ENCODE measurements at regions of chr22 and their contacts with region 1.

Region 1: DNA sequence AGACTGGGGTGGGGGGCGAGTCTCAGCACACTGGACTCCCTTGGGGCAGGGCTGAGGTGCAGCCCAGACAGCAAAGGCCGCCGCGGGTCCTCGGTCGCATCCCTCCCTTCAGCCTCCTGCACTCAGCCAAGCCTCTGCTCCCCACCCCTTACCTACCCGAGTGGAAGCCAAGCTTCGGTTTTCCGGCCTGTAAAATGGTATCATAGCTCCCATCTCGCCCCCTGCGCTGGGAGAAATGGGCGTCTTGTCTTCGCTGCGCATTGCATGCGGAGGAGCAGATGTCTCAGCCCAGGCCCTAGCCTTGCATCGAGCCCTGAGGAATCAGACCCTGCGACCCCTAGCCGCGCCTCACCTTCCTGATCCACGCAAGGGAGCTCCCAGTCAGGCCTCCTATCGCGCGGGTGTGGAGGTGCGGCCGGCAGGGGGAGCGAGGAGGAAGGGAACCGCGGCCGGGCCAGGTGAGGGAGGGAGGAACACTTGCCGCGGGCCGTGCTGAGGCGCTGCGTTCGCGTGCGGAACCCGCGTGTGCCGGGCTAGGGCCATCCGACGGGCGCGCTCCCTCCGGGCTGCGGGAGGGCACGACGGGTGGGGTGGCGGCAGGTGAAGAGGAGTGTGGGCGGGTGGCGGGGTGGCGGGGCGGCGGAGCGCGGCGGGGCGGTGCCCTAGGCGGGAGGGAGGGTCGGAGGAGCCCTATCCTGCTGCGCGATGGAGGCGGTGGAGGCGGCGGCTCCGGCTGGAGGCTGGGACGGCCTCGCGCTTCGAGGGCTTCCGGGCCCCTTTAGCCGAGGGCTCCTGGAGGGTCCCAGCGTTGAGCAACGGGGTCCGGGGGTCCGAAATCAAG is 4.1 kb upstream of the TBX1 start:
- DNase-seq: no peak
- ATAC-seq: peak; percentile 72
- H3K4me3 Mint-ChIP-seq: peak overlapping the region; percentile 66
- H3K27ac Mint-ChIP-seq: no peak overlapping the region
- H3K4me1 Mint-ChIP-seq: peaks cover 29% of the 10 kb centered on the region
- H3K27me3 Mint-ChIP-seq: peaks cover 48% of the 10 kb centered on the region
- CTCF ChIP-seq: no peak

Region 2: DNA sequence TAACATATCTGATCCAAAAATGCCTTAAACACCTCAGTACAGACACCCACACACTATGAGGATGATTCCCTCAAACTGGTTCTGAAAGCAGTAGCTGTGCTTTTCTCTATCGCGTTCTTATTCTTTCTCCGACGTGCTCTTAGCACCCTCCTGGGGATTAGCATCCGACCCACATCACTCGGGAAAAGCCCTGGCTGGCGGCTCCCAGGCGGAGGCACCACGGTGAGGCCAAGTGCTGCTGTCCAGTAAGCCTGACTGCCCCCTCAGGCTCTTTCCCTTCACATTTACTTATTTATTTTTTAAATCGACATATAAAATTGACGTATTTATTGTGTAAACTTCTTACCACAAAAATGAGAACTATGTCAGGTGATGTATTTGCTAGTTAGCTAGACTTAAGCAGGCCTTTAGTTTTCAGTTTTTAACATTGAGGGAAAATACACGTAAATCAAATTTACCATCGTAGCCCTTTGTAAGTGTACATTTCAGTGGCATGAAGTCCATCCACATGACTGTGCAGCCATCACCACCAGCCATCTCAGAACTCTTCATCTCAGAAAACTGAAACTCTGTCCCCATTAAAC is 23.3 kb after region 1 on chr22:
- CTCF ChIA-PET with region 1: no interaction called
- POLR2A ChIA-PET with region 1: no interaction called
- intact Hi-C with region 1: loop called (anchors 2 kb)
- DNase-seq: no peak
- ATAC-seq: no peak
- H3K4me3 Mint-ChIP-seq: no peak overlapping the region
- H3K27ac Mint-ChIP-seq: no peak overlapping the region
- H3K4me1 Mint-ChIP-seq: peaks cover 13% of the 10 kb centered on the region
- H3K27me3 Mint-ChIP-seq: peaks cover 37% of the 10 kb centered on the region
- CTCF ChIP-seq: no peak

Region 3: DNA sequence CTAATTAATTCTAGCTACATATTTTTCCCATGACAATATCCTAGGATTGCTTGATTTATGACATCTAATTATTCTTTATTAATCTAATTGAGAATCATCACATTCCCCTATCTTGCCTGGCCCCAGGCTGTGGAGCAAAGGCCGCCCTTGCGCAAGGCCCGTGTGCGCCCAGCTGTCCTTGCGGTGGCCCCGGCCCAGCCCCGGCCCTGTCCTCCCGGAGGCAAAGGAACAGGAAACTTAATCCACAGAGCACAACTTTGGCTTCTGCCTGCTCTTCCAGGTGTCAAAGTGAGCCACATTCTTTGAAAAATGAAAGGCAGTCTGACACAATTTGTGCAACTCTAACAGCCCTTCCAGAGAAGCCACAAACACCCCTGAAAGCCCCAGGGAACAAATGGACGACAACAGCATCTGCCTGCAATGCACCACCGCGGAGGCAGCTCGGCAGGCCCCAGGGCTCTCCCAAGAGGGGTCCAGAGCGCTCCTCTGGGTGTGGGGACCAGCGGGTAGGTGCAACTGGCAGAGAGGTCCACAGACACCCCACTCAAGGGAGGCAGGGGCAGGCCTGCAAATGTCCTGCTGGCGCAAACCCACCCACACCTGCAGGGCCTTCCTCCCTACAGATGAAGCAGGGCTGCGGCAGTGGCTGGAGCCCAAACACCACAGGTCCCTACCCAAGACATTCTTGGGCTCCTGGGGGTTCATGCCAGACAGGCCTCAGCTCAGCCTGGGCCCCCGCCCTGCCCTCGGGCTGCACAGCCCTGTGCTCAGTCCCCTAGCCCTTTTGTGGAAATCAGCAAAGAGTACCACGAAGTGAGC is 67.9 kb after region 1 on chr22:
- CTCF ChIA-PET with region 1: no interaction called
- POLR2A ChIA-PET with region 1: no interaction called
- intact Hi-C with region 1: no loop called
- DNase-seq: peak; percentile 5
- ATAC-seq: no peak
- H3K4me3 Mint-ChIP-seq: no peak overlapping the region
- H3K27ac Mint-ChIP-seq: no peak overlapping the region
- H3K4me1 Mint-ChIP-seq: no peaks in the 10 kb centered on the region
- H3K27me3 Mint-ChIP-seq: no peaks in the 10 kb centered on the region
- CTCF ChIP-seq: no peak

Region 4: DNA sequence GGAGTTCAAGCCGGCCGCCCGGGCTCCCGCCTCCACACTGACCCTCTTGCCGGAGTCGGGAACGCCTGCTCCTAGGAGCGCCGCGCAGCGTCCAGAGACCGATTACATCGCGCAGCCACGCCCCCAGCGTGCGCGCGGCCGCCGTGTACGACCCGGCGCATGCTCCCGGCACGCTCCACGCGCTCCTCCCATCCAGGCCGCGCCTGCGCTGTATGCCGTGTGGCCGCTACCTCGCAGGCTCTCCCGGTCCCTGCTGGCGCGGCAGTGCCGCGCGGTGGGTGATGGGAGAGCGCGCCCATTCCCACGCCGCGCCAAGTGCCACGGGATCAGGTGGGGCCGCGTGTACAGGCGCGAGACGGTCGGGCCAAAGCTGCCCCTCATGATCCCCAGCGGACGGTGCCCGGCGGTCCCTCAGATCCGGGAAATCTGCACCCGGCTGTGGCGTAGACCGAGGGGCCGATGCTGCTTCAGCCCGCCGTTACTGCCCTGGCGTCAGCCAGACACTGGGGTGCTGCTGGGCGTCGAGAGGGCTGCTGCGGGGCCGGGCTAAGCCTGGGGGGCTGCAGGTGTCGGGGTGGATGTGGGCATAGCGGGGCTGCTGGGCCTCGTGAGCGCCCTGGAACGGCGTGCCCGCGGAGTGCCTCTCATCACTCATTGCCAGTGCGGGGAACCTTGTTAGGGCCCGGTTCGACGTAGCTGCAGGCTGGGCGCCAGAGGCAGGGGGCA is 98.4 kb after region 1 on chr22 and contains the starts of genes GNB1L and RTL10:
- CTCF ChIA-PET with region 1: interaction called, 8 read pairs
- POLR2A ChIA-PET with region 1: no interaction called
- intact Hi-C with region 1: loop called (anchors 5 kb)
- DNase-seq: peak; percentile 98
- ATAC-seq: peak; percentile 92
- H3K4me3 Mint-ChIP-seq: peak within 1 kb of the TSS; percentile 91
- H3K27ac Mint-ChIP-seq: peak within 1 kb of the TSS; percentile 88
- H3K4me1 Mint-ChIP-seq: peaks cover 39% of the 10 kb centered on the region
- H3K27me3 Mint-ChIP-seq: no peaks in the 10 kb centered on the region
- CTCF ChIP-seq: no peak
- total RNA-seq, gene GNB1L: 5.8 and 6.3 TPM in 2 replicates
- total RNA-seq, gene RTL10: 9.1 and 12.1 TPM in 2 replicates

Region 5: DNA sequence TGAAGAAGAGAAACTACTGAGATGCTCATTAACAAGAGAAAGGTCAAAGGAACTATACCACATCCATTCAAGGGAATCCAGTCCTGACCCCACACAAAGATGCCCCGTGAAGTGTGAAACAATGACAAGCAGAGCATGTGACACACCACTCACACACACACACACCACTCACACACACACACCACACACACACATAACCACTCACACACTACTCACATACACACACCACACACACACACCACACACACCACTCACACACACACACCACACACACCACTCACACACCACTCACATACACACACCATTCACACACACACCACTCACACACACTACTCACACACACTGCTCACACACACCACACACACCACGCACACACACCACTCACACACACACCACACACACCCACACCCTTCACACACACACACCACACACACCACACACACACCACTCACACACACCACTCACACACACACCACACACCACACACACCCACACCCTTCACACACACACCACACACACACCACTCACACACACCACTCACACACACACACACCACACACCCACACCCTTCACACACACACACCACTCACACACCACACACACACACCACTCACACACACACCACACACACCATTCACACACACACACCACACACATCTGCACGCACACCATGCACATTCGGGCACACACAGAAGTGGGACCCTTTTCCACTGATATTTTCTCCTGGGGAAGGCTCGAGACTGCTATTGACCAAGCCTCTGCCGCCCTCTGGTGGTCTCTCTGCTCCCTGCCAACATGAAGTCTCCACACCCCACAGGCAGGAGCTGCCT is 153.1 kb after region 1 on chr22:
- CTCF ChIA-PET with region 1: interaction called, 10 read pairs
- POLR2A ChIA-PET with region 1: no interaction called
- intact Hi-C with region 1: loop called (anchors 1 kb)
- DNase-seq: peak; percentile 69
- ATAC-seq: peak; percentile 91
- H3K4me3 Mint-ChIP-seq: no peak overlapping the region
- H3K27ac Mint-ChIP-seq: no peak overlapping the region
- H3K4me1 Mint-ChIP-seq: peaks cover 2% of the 10 kb centered on the region
- H3K27me3 Mint-ChIP-seq: no peaks in the 10 kb centered on the region
- CTCF ChIP-seq: no peak